Panc1 (cell line): ENCODE measurements at regions of chr22 and their contacts with region 1.

Region 1: GRCh38 chr22:32985899-32986765 is 72.0 kb downstream of the SYN3 start:
- DNase-seq: peak; percentile 33
- ATAC-seq: peak; percentile 91
- H3K4me3 ChIP-seq: no peak overlapping the region
- H3K27ac ChIP-seq: no peak overlapping the region
- H3K4me1 ChIP-seq: no peaks in the 10 kb centered on the region
- H3K27me3 ChIP-seq: no peaks in the 10 kb centered on the region
- CTCF ChIP-seq: peak; percentile 83

Region 2: DNA sequence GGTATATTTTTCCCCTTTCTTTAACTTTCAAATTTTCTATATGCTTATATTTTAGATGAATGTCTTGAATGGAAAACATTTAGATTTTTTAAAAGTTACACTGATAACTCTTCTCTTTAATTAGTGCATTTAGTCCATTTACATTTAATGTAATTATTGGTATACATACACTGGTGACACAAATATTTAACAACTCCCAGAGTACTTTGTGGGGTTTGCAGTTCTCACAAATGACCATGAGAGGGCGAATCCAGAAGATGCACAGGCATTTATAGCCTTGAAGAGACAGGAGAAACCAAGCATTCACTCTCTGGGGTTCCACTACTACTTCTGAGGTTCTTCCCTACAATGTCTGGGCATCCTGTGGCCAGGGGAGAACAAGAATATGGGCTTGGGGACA is 59.5 kb before region 1 on chr22:
- CTCF ChIA-PET with region 1: no interaction called
- POLR2A ChIA-PET with region 1: no interaction called
- in situ Hi-C with region 1: no loop called
- intact Hi-C with region 1: loop called (anchors 10 kb)
- DNase-seq: no peak
- ATAC-seq: no peak
- H3K4me3 ChIP-seq: no peak overlapping the region
- H3K27ac ChIP-seq: no peak overlapping the region
- H3K4me1 ChIP-seq: no peaks in the 10 kb centered on the region
- H3K27me3 ChIP-seq: no peaks in the 10 kb centered on the region
- CTCF ChIP-seq: peak; percentile 51